ENCODE measurements at regions of chr11 and their contacts with region 1.

Region 1: GRCh38 chr11:76670485-76671236 is at the start of gene LRRC32:
- DNase-seq: peak in 3 of 4 donors; percentile 63 to 89 (median 69)
- ATAC-seq: peak; percentile 61
- H3K4me3 ChIP-seq: peak within 1 kb of the TSS; percentile 51 to 52
- H3K27ac ChIP-seq: peak within 1 kb of the TSS; percentile 74 to 77
- H3K4me1 ChIP-seq: peaks cover 8 to 51% of the 10 kb centered on the region in 2 donors
- H3K27me3 ChIP-seq: peaks cover 10 to 47% of the 10 kb centered on the region in 2 donors
- CTCF ChIP-seq: no peak
- polyA plus RNA-seq, gene LRRC32: 40.0 to 47.9 (median 45.0) TPM

Region 2: DNA sequence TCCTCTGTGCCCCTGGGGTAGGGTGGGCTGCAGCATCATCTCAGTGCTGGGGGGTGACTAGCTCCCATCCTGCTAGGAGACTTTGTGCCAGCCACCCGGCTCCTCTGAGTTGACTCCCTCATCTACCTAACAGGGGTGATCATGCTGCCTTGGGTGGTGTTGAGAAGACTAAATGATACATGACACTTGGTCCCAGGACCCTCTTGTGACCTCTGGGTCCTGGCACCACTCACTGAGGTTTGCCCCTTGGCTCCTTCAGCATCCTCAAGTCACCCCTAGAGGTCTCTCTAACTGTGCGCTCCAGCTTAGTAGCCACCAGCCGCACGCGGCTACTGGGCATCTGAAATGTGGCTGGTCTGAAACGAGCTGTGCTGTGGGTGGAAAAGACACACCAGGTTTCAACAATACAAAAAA is 72.2 kb before region 1 on chr11:
- intact Hi-C with region 1: loop called in 1 of 2 experiments (anchors 10 kb)
- DNase-seq: no peak
- ATAC-seq: peak; percentile 64
- H3K4me3 ChIP-seq: no peak overlapping the region
- H3K27ac ChIP-seq: no peak overlapping the region
- H3K4me1 ChIP-seq: peaks cover 0 to 17% of the 10 kb centered on the region in 2 donors
- H3K27me3 ChIP-seq: no peaks in the 10 kb centered on the region
- CTCF ChIP-seq: peak; percentile 31 to 39